ENCODE measurements at regions of chr10 and their contacts with region 1.

Region 1: DNA sequence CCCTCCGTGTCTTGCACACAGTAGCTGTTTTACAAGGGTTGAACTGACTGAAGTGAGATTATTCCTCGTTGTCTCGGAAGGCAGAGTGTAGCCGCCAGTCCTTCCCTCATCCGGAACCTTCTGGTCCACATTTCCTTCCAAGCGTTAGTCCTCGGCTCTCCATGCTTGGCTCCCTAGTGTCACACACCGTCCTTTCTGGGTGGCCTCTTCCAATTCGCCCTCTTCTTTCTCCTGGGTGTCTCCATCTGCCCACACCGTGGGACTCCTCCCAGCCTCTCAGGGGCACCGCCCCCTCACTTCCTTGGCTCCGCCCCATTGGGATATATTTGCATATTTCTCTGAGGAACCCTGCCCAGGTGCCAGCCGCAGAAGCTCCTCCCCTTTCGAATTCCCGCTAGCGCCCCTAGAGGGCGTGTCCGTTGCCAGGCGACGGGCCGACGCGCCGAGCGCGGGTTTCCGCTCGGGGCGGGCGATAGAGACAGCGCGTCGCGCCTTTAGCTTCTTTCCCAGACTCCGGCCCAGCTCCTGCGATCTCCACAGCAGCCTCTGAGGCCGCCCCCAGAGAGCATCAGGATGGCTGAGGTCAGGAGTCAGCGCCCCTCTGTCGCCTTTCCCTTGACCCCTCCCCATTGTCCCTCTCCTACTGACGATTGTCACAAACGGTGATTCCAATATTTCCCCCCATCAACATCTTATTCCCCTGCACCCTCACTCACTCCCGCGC is at the start of gene CFAP58:
- DNase-seq: peak; percentile 87
- H3K4me3 Mint-ChIP-seq: peak within 1 kb of the TSS; percentile 64
- H3K27ac Mint-ChIP-seq: peak within 1 kb of the TSS; percentile 56
- H3K4me1 Mint-ChIP-seq: peaks cover 13% of the 10 kb centered on the region
- H3K27me3 Mint-ChIP-seq: no peaks in the 10 kb centered on the region
- total RNA-seq, gene CFAP58: 0.57 and 1.1 TPM in 2 replicates

Region 2: GRCh38 chr10:104291439-104291951 is 62.0 kb before region 1 on chr10:
- intact Hi-C with region 1: loop called (anchors 1 kb)
- DNase-seq: peak; percentile 80
- H3K4me3 Mint-ChIP-seq: no peak overlapping the region
- H3K27ac Mint-ChIP-seq: no peak overlapping the region
- H3K4me1 Mint-ChIP-seq: peaks cover 13% of the 10 kb centered on the region
- H3K27me3 Mint-ChIP-seq: peaks cover 38% of the 10 kb centered on the region

Region 3: GRCh38 chr10:104308439-104308903 is 45.0 kb before region 1 on chr10:
- intact Hi-C with region 1: loop called (anchors 1 kb)
- DNase-seq: no peak
- H3K4me3 Mint-ChIP-seq: peak overlapping the region; percentile 6
- H3K27ac Mint-ChIP-seq: peak overlapping the region; percentile 67
- H3K4me1 Mint-ChIP-seq: peaks cover 38% of the 10 kb centered on the region
- H3K27me3 Mint-ChIP-seq: no peaks in the 10 kb centered on the region

Region 4: GRCh38 chr10:104328896-104329710 is 24.4 kb before region 1 on chr10:
- intact Hi-C with region 1: loop called (anchors 1 kb)
- DNase-seq: peak; percentile 44
- H3K4me3 Mint-ChIP-seq: peak overlapping the region; percentile 68
- H3K27ac Mint-ChIP-seq: peak overlapping the region; percentile 90
- H3K4me1 Mint-ChIP-seq: peaks cover 91% of the 10 kb centered on the region
- H3K27me3 Mint-ChIP-seq: no peaks in the 10 kb centered on the region

Region 5: DNA sequence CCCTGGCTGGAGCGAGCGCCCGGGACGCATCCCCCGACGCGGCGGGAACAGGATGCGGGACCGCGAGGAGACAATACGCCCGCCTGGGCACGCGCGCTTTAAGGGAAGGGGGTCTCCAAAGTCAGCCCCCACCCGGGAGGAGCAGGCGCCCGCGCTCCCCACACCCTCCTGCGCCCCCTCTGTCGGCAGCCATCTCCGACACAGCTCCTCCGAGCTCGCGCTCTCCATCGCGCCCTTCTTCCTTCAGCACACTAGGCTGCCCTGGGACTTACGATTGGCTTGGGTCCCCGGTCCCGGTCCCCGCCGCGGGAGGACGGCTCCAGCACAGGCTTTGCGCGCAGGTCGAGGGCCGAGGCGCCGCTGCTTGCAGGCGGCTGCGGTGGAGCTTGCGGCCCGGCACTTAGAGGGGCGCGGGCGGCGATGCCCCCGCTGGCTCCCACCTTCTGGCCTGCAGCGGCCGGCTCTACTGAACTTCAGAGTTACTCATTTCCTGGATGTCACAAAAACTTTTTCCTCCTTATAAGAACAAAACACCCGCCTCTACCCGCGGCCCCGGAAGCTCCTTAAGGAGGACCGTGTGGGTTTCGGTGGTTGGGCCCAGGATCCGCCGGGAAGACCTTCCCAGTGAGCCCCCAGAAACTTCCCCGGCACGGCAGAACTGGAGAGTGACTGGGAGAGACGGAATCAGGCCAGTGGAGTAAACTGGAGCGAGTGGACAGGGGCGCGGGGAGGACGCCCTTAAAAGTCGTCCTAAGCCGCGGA is 15.3 kb before region 1 on chr10 and contains the start of gene ITPRIP:
- intact Hi-C with region 1: loop called (anchors 1 kb)
- DNase-seq: peak; percentile 74
- H3K4me3 Mint-ChIP-seq: peak within 1 kb of the TSS; percentile 97
- H3K27ac Mint-ChIP-seq: peak within 1 kb of the TSS; percentile 99
- H3K4me1 Mint-ChIP-seq: peaks cover 46% of the 10 kb centered on the region
- H3K27me3 Mint-ChIP-seq: peaks cover 1% of the 10 kb centered on the region
- total RNA-seq, gene ITPRIP: 17.1 and 18.8 TPM in 2 replicates

Region 6: DNA sequence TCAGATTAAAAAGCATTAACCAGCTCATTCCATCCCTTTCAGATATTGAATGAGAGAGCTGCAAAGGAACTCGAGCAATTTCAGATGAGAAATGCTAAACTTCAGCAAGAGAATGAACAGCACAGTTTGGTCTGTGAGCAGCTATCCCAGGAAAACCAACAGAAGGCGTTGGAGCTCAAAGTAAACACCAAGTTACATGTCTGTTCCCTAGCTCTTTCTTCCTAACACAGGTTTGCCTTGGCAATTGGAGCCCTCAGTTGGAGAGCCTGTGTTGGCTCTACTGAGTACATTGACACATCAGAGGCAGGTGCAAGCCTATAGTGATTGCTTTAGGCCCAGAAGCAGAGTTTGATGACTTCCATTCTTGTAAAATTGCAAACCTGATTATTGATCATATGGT is 14.9 kb after region 1 on chr10:
- intact Hi-C with region 1: no loop called
- DNase-seq: no peak
- H3K4me3 Mint-ChIP-seq: no peak overlapping the region
- H3K27ac Mint-ChIP-seq: no peak overlapping the region
- H3K4me1 Mint-ChIP-seq: no peaks in the 10 kb centered on the region
- H3K27me3 Mint-ChIP-seq: peaks cover 25% of the 10 kb centered on the region